Endothelial cell of umbilical vein (primary cell): ENCODE measurements at regions of chr3 and their contacts with region 1.

Region 1: DNA sequence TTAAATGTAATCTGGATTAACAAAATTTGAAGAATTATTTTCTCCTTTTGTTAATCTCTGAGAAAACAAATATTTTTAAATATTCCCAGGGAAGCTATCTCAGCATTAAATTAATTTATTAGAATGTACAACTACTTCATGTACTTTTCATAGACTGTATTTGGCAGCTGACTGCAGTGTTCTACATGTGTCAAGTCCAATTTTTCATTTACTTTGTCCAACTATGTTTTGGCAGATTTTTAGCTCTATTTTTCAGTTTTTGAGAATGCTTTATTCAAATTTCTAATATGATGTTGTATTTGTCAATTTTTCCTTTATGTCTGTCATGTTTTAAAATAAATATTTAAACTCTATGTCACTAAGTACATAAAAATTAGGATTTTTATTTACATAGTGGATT is 925.1 kb downstream of the OTOL1 start:
- DNase-seq: no peak
- H3K4me3 ChIP-seq: no peak overlapping the region
- H3K27ac ChIP-seq: no peak overlapping the region
- H3K4me1 ChIP-seq: no peaks in the 10 kb centered on the region
- H3K27me3 ChIP-seq: no peaks in the 10 kb centered on the region
- CTCF ChIP-seq: no peak
- POLR2A ChIP-seq: no peak

Region 2: GRCh38 chr3:162376761-162377160 is 45.0 kb before region 1 on chr3:
- CTCF ChIA-PET with region 1: no interaction called
- POLR2A ChIA-PET with region 1: no interaction called
- dilution Hi-C with region 1: no loop called
- intact Hi-C with region 1: loop called (anchors 2 kb)
- DNase-seq: no peak
- H3K4me3 ChIP-seq: no peak overlapping the region
- H3K27ac ChIP-seq: no peak overlapping the region
- H3K4me1 ChIP-seq: no peaks in the 10 kb centered on the region
- H3K27me3 ChIP-seq: no peaks in the 10 kb centered on the region
- CTCF ChIP-seq: no peak
- POLR2A ChIP-seq: no peak

Region 3: DNA sequence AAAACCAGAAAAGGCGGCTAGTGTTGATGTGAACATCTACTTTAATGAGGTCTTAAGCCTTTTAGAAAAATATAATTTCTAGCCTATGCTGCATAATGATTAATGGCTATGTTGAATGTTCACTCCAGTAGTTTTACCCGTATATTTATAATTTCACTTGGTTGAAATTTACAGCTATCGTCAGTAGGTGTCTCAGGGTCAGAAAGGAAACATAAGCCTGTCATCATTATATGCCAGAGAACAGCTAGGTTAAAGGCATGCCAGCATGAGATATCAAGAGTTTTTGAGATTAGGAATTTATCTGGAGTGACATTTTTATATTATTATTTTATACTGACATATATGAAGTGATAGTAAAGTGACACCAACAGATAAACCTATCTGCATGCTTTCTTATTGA is 21.0 kb before region 1 on chr3:
- CTCF ChIA-PET with region 1: no interaction called
- POLR2A ChIA-PET with region 1: no interaction called
- dilution Hi-C with region 1: no loop called
- intact Hi-C with region 1: no loop called
- DNase-seq: no peak
- H3K4me3 ChIP-seq: no peak overlapping the region
- H3K27ac ChIP-seq: no peak overlapping the region
- H3K4me1 ChIP-seq: no peaks in the 10 kb centered on the region
- H3K27me3 ChIP-seq: no peaks in the 10 kb centered on the region
- CTCF ChIP-seq: no peak
- POLR2A ChIP-seq: no peak

Region 4: GRCh38 chr3:162437480-162437879 is 15.8 kb after region 1 on chr3:
- CTCF ChIA-PET with region 1: no interaction called
- POLR2A ChIA-PET with region 1: no interaction called
- dilution Hi-C with region 1: no loop called
- intact Hi-C with region 1: no loop called
- DNase-seq: no peak
- H3K4me3 ChIP-seq: no peak overlapping the region
- H3K27ac ChIP-seq: no peak overlapping the region
- H3K4me1 ChIP-seq: no peaks in the 10 kb centered on the region
- H3K27me3 ChIP-seq: no peaks in the 10 kb centered on the region
- CTCF ChIP-seq: no peak
- POLR2A ChIP-seq: no peak

Region 5: GRCh38 chr3:162956711-162957110 is 535.0 kb after region 1 on chr3:
- CTCF ChIA-PET with region 1: no interaction called
- POLR2A ChIA-PET with region 1: no interaction called
- dilution Hi-C with region 1: no loop called
- intact Hi-C with region 1: no loop called
- DNase-seq: no peak
- H3K4me3 ChIP-seq: no peak overlapping the region
- H3K27ac ChIP-seq: no peak overlapping the region
- H3K4me1 ChIP-seq: no peaks in the 10 kb centered on the region
- H3K27me3 ChIP-seq: no peaks in the 10 kb centered on the region
- CTCF ChIP-seq: no peak
- POLR2A ChIP-seq: no peak